Body of pancreas (tissue), 4 donors: ENCODE measurements at regions of chr15 and their contacts with region 1.

Region 1: DNA sequence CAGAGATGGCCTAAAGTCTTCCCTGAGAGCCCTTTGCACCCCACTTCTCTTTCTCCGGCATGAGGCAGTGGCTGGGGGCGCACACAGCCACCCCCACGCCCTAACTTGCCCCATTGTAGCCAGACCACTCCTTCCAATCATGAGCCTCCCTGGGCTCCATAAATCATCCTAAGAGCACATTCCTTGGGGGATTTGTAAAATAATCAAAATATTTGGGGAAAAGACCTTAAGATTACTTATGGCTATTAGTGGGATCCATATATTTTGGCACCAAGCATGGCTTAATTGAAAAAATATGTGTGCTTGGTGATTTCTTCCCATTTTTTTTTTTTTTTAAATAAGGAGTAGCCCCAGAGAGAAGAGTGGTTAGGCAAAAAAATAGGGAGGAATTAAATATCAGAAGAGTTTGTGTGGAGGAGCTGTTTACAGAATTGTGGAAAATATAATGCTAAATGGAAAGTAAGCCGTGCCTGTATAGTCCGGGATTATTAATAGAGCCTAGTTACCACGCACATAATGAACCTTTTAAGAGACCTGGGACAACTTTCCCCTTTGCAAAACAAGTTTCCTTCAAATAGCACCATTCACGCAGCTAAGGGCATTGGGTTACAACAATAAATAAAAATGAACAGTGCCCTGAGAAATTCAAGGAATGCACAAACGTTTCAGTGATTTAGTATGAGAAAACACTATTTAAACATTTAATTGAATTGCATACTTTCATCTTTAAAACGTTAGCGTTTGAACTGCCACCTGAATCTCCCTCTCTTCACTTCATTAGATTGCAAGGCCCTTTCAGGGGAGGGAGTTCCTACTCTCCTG is 46.1 kb downstream of the SMAD6 start:
- DNase-seq: no peak
- ATAC-seq: peak; percentile 28
- H3K4me3 ChIP-seq: no peak overlapping the region
- H3K27ac ChIP-seq: peak overlapping the region; percentile 15 to 64 (median 50)
- H3K4me1 ChIP-seq: peaks cover 72% of the 10 kb centered on the region
- H3K27me3 ChIP-seq: no peaks in the 10 kb centered on the region
- CTCF ChIP-seq: no peak
- POLR2A ChIP-seq: no peak

Region 2: GRCh38 chr15:66535016-66535415 is 213.1 kb before region 1 on chr15:
- intact Hi-C with region 1: no loop called
- DNase-seq: no peak
- ATAC-seq: no peak
- H3K4me3 ChIP-seq: no peak overlapping the region
- H3K27ac ChIP-seq: no peak overlapping the region
- H3K4me1 ChIP-seq: no peaks in the 10 kb centered on the region
- H3K27me3 ChIP-seq: no peaks in the 10 kb centered on the region
- CTCF ChIP-seq: no peak
- POLR2A ChIP-seq: no peak

Region 3: GRCh38 chr15:66560851-66561525 is 187.1 kb before region 1 on chr15:
- intact Hi-C with region 1: no loop called
- DNase-seq: no peak
- ATAC-seq: no peak
- H3K4me3 ChIP-seq: no peak overlapping the region
- H3K27ac ChIP-seq: no peak overlapping the region
- H3K4me1 ChIP-seq: no peaks in the 10 kb centered on the region
- H3K27me3 ChIP-seq: no peaks in the 10 kb centered on the region
- CTCF ChIP-seq: no peak
- POLR2A ChIP-seq: no peak

Region 4: DNA sequence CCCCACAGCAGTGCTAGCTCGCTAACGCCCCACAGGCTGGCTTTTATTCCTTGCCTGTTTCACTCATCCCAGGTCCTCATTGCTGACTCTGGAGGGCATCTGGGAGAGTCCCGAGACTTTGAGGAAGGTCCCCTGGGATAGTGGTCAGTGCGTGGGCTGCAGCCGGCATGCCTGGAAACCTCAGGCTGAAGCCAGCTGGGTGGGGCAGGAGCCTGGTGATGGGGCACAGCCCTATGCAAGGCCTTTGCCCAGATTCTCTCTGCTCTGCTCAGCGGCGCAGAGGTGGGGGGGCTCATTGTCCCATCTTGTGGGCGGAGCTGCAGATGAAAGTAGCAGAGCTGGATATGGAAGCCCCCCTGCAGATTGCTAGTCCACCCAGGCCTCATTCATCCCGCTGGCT is 101.8 kb before region 1 on chr15:
- intact Hi-C with region 1: no loop called
- DNase-seq: no peak
- ATAC-seq: no peak
- H3K4me3 ChIP-seq: no peak overlapping the region
- H3K27ac ChIP-seq: no peak overlapping the region
- H3K4me1 ChIP-seq: peaks cover 5% of the 10 kb centered on the region
- H3K27me3 ChIP-seq: no peaks in the 10 kb centered on the region
- CTCF ChIP-seq: no peak
- POLR2A ChIP-seq: no peak

Region 5: DNA sequence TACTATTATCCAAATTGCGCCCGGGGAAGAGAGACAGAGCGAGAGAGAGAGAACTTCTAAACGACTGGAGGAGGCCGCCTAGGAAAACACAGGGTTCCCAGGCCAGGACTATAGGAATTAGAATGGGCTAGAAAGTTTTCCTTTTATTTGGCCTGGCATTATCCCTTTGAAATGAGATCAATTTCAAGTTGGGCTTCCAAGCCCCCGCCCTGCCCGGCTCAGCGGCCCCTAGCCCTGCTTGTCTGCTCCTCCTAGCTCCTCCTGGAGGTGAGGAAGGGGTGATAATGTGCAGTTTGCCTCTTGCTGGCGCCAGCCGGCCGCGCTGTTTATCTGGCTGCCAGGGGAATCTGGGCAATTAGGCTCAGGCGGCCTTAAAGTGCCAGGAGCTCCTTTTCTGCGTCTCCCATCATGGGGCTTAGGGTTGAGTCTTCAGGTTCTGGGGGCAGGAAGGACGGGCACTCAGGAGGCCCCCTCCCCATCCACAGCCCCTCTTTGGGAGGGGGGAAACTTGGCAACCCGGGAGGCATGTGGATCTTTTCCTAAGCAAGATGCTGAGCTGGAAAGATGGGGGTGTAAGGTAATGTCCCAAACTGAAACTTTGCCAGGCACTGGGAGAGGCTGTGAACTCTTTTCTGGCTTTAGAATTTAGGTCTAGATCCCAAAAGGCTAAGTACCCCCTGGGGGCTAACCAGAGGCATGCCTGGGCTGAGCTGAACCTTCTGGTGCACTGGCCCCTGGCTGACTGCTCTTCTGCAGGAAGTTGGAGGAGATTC is 40.6 kb before region 1 on chr15:
- intact Hi-C with region 1: loop called (anchors 5 kb)
- DNase-seq: peak; percentile 52 to 71 (median 58)
- ATAC-seq: peak; percentile 26
- H3K4me3 ChIP-seq: no peak overlapping the region
- H3K27ac ChIP-seq: peak overlapping the region in 2 of 4 donors; percentile 34 to 36
- H3K4me1 ChIP-seq: peaks cover 50% of the 10 kb centered on the region
- H3K27me3 ChIP-seq: no peaks in the 10 kb centered on the region
- CTCF ChIP-seq: peak in 4 of 7 experiments; percentile 25 to 38 (median 26)
- POLR2A ChIP-seq: no peak